ENCODE measurements at regions of chr7 and their contacts with region 1.

Region 1: GRCh38 chr7:83524286-83525075 is 124.5 kb downstream of the SEMA3E start:
- DNase-seq: no peak
- ATAC-seq: no peak
- H3K4me3 ChIP-seq: no peak overlapping the region
- H3K27ac ChIP-seq: no peak overlapping the region
- H3K4me1 ChIP-seq: no peaks in the 10 kb centered on the region
- H3K27me3 ChIP-seq: no peaks in the 10 kb centered on the region
- CTCF ChIP-seq: no peak
- EP300 ChIP-seq: no peak
- POLR2A ChIP-seq: no peak
- RAD21 ChIP-seq: no peak

Region 2: DNA sequence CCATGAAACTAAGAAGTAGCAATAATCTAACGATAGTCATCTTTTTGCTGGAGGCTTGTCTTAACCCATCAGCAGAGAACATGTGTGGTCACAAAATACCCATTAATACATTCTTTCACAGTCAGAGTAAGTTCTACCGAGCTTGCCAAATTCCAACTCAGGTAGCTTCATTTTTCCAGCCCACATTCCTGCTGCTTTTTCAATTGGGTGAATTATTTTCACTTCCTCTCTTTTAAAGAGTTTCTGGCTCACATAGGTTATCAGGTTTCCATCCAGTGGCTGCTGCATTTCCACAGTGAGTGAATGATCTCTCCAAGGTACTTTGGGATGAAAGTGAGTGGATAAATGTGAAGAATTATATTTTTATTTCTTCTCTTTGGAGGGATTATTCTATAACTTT is 108.6 kb before region 1 on chr7:
- CTCF ChIA-PET with region 1: no interaction called
- POLR2A ChIA-PET with region 1: no interaction called
- in situ Hi-C with region 1: no loop called
- intact Hi-C with region 1: no loop called
- DNase-seq: no peak
- ATAC-seq: no peak
- H3K4me3 ChIP-seq: no peak overlapping the region
- H3K27ac ChIP-seq: no peak overlapping the region
- H3K4me1 ChIP-seq: no peaks in the 10 kb centered on the region
- H3K27me3 ChIP-seq: no peaks in the 10 kb centered on the region
- CTCF ChIP-seq: no peak
- EP300 ChIP-seq: no peak
- POLR2A ChIP-seq: no peak
- RAD21 ChIP-seq: no peak

Region 3: GRCh38 chr7:83617858-83618257 is 93.4 kb after region 1 on chr7:
- CTCF ChIA-PET with region 1: no interaction called
- POLR2A ChIA-PET with region 1: no interaction called
- in situ Hi-C with region 1: no loop called
- intact Hi-C with region 1: no loop called
- DNase-seq: no peak
- ATAC-seq: no peak
- H3K4me3 ChIP-seq: no peak overlapping the region
- H3K27ac ChIP-seq: no peak overlapping the region
- H3K4me1 ChIP-seq: no peaks in the 10 kb centered on the region
- H3K27me3 ChIP-seq: no peaks in the 10 kb centered on the region
- CTCF ChIP-seq: no peak
- EP300 ChIP-seq: no peak
- POLR2A ChIP-seq: no peak
- RAD21 ChIP-seq: no peak

Region 4: DNA sequence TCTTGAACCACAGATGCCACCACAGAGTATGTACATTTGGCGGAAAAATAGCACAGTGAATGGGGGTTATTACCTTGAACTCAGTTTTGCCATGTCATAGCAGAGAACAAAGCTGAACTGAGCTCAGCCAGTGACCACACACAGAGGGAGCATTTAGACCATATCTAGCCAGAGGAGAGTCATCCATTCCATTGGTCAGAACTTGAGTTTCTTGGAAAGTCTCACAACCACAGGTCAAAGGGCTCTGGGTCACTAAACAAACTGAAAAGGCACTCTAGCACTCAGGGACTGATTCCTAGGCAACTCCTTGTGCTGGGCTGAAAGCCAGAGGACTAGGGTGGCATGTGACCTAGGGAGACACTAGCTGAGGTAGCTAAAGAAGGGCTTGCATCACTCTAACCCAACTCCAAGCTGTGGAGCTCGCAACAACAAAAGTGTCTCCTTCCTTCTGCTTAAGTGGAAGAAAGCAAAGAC is 1902.0 kb after region 1 on chr7:
- CTCF ChIA-PET with region 1: no interaction called
- POLR2A ChIA-PET with region 1: no interaction called
- in situ Hi-C with region 1: loop called (anchors 25 kb)
- intact Hi-C with region 1: no loop called
- DNase-seq: no peak
- ATAC-seq: no peak
- H3K4me3 ChIP-seq: no peak overlapping the region
- H3K27ac ChIP-seq: no peak overlapping the region
- H3K4me1 ChIP-seq: no peaks in the 10 kb centered on the region
- H3K27me3 ChIP-seq: no peaks in the 10 kb centered on the region
- CTCF ChIP-seq: no peak
- EP300 ChIP-seq: no peak
- POLR2A ChIP-seq: no peak
- RAD21 ChIP-seq: no peak

Measured in K562 (cell line).